Heart left ventricle (tissue), 16 donors: ENCODE measurements at regions of chrX and their contacts with region 1.

Region 1: GRCh38 chrX:101906136-101906796 is 25.6 kb downstream of the ZMAT1 start:
- DNase-seq: peak in 1 of 5 donors; percentile 23
- ATAC-seq: peak in 1 of 4 donors; percentile 39
- H3K4me3 ChIP-seq: no peak overlapping the region
- H3K27ac ChIP-seq: no peak overlapping the region
- H3K4me1 ChIP-seq: peaks cover 0 to 5% (median 0%) of the 10 kb centered on the region in 12 donors
- H3K27me3 ChIP-seq: no peaks in the 10 kb centered on the region
- CTCF ChIP-seq: no peak
- POLR2A ChIP-seq: no peak

Region 2: GRCh38 chrX:101958133-101958532 is 51.9 kb after region 1 on chrX:
- intact Hi-C with region 1: loop called in 1 of 10 experiments (anchors 10 kb)
- DNase-seq: no peak
- ATAC-seq: no peak
- H3K4me3 ChIP-seq: no peak overlapping the region
- H3K27ac ChIP-seq: no peak overlapping the region
- H3K4me1 ChIP-seq: no peaks in the 10 kb centered on the region
- H3K27me3 ChIP-seq: peaks cover 0 to 10% (median 0%) of the 10 kb centered on the region in 9 donors
- CTCF ChIP-seq: no peak
- POLR2A ChIP-seq: no peak